Activated B cell treated with CpG ODN at 0.5 μM for 24 hours (primary cell): ENCODE measurements at regions of chr19 and their contacts with region 1.

Region 1: GRCh38 chr19:2543463-2544442 is 67.8 kb downstream of the GADD45B start:
- DNase-seq: peak; percentile 68
- ATAC-seq: peak; percentile 72
- H3K4me3 Mint-ChIP-seq: peak overlapping the region; percentile 66
- H3K27ac Mint-ChIP-seq: peak overlapping the region; percentile 74
- H3K4me1 Mint-ChIP-seq: peaks cover 37% of the 10 kb centered on the region
- H3K27me3 Mint-ChIP-seq: no peaks in the 10 kb centered on the region
- CTCF ChIP-seq: no peak

Region 2: GRCh38 chr19:2507109-2507508 is 36.6 kb before region 1 on chr19:
- CTCF ChIA-PET with region 1: no interaction called
- POLR2A ChIA-PET with region 1: interaction called, 6 read pairs
- intact Hi-C with region 1: loop called (anchors 5 kb)
- DNase-seq: no peak
- ATAC-seq: peak; percentile 14
- H3K4me3 Mint-ChIP-seq: peak overlapping the region; percentile 66
- H3K27ac Mint-ChIP-seq: peak overlapping the region; percentile 50
- H3K4me1 Mint-ChIP-seq: peaks cover 39% of the 10 kb centered on the region
- H3K27me3 Mint-ChIP-seq: no peaks in the 10 kb centered on the region
- CTCF ChIP-seq: no peak

Region 3: DNA sequence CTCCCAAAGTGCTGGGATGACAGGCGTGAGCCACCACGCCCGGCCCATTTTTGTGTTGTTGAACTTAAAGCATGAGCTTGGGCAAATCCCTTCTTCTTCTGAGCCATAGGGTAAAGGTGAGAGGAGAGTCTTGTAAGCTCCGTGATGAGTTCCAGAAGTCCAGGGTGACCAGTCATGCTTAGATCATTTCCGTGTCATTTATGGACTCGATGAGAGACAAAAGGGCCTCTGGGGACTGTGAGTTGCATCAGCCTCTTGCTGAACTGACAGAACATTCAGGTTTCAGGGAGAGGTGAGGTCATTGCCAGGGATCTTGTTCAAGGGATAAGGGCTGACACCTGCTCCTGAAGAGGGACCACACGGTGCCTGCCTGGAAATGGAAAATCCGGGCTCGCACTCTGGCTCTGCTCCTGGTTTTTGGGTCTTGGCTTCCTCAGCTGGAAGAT is 14.3 kb before region 1 on chr19:
- CTCF ChIA-PET with region 1: no interaction called
- POLR2A ChIA-PET with region 1: interaction called, 21 read pairs
- intact Hi-C with region 1: no loop called
- DNase-seq: no peak
- ATAC-seq: no peak
- H3K4me3 Mint-ChIP-seq: no peak overlapping the region
- H3K27ac Mint-ChIP-seq: peak overlapping the region; percentile 53
- H3K4me1 Mint-ChIP-seq: peaks cover 22% of the 10 kb centered on the region
- H3K27me3 Mint-ChIP-seq: no peaks in the 10 kb centered on the region
- CTCF ChIP-seq: no peak

Region 4: DNA sequence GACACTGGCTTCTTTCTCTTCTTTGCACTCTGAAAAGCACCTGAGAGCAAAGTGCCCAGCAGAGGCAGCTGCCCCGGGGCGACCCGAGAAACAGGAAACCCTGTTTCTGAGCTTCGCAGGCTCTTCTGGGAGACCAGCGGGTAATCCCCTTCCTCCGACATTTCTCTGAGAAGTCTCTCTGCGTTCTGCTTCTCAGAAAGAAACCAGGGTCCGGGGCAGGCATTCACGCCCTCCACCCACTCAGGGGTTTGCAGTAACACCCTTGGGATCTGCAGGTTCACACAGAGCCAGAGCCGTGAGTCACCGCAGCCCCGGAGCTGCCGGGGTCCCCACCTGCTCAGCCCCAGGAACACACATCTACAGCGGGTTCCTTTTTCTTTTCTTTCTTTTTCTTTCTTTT is 18.1 kb after region 1 on chr19:
- CTCF ChIA-PET with region 1: interaction called, 3 read pairs
- POLR2A ChIA-PET with region 1: interaction called, 12 read pairs
- intact Hi-C with region 1: loop called (anchors 2 kb)
- DNase-seq: peak; percentile 70
- ATAC-seq: peak; percentile 92
- H3K4me3 Mint-ChIP-seq: peak overlapping the region; percentile 87
- H3K27ac Mint-ChIP-seq: peak overlapping the region; percentile 94
- H3K4me1 Mint-ChIP-seq: peaks cover 60% of the 10 kb centered on the region
- H3K27me3 Mint-ChIP-seq: no peaks in the 10 kb centered on the region
- CTCF ChIP-seq: no peak

Region 5: GRCh38 chr19:2602391-2603181 is 58.8 kb after region 1 on chr19:
- CTCF ChIA-PET with region 1: no interaction called
- POLR2A ChIA-PET with region 1: interaction called, 25 read pairs
- intact Hi-C with region 1: no loop called
- DNase-seq: no peak
- ATAC-seq: no peak
- H3K4me3 Mint-ChIP-seq: no peak overlapping the region
- H3K27ac Mint-ChIP-seq: no peak overlapping the region
- H3K4me1 Mint-ChIP-seq: peaks cover 56% of the 10 kb centered on the region
- H3K27me3 Mint-ChIP-seq: no peaks in the 10 kb centered on the region
- CTCF ChIP-seq: no peak